ENCODE measurements at regions of chr18 and their contacts with region 1.

Region 1: DNA sequence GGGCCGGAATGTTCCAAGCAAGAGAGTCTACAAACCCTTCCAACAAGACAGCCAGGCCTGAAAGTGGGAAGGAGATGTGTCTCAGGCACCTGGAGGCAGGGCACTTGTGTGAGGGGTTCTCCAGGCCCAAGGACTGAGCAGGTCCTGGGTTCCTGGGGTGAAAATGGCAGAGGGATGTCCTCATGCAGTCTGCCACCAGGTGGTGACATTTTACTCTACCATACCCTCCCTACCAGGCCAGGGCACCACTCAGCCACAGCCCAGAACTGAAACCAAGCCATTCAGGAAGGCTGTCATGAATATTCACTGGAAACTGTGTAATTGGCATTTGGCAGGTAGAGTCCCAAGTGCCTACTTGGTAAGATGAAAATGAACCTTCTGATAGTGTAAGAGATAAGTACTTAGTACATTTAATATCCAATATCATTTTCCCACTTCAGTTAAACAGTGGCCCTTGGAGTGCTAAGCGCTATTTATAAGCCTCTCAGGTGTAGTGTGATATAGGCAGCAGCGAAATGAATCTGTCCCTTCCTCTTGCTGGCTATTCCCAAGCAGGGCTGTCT is 185.1 kb downstream of the MYO5B start:
- DNase-seq: peak; percentile 22
- ATAC-seq: peak; percentile 94
- H3K4me3 ChIP-seq: no peak overlapping the region
- H3K27ac ChIP-seq: no peak overlapping the region
- H3K4me1 ChIP-seq: no peaks in the 10 kb centered on the region
- H3K27me3 ChIP-seq: peaks cover 4% of the 10 kb centered on the region; the same call in 1 of the 2 replicates
- CTCF ChIP-seq: peak; percentile 51

Region 2: GRCh38 chr18:50194631-50195532 is 185.0 kb after region 1 on chr18 and contains the start of gene MYO5B:
- CTCF ChIA-PET with region 1: no interaction called
- POLR2A ChIA-PET with region 1: no interaction called
- in situ Hi-C with region 1: no loop called
- intact Hi-C with region 1: loop called (anchors 10 kb)
- DNase-seq: no peak
- ATAC-seq: peak; percentile 87
- H3K4me3 ChIP-seq: peak within 1 kb of the TSS; percentile 26 to 37; a peak in 3 of 4 replicates
- H3K27ac ChIP-seq: no peak within 1 kb of the TSS
- H3K4me1 ChIP-seq: no peaks in the 10 kb centered on the region
- H3K27me3 ChIP-seq: peaks cover 10% of the 10 kb centered on the region; the same call in 1 of the 2 replicates
- CTCF ChIP-seq: peak; percentile 72
- total RNA-seq, gene MYO5B: 0.31 TPM

Measured in Panc1 (cell line).